Keratinocyte (primary cell): ENCODE measurements at regions of chr1 and their contacts with region 1.

Region 1: GRCh38 chr1:116483481-116484309 is 87.1 kb downstream of the CD58 start:
- DNase-seq: no peak
- H3K4me3 ChIP-seq: no peak overlapping the region
- H3K27ac ChIP-seq: no peak overlapping the region
- H3K4me1 ChIP-seq: peaks cover 6% of the 10 kb centered on the region
- H3K27me3 ChIP-seq: no peaks in the 10 kb centered on the region
- CTCF ChIP-seq: no peak

Region 2: DNA sequence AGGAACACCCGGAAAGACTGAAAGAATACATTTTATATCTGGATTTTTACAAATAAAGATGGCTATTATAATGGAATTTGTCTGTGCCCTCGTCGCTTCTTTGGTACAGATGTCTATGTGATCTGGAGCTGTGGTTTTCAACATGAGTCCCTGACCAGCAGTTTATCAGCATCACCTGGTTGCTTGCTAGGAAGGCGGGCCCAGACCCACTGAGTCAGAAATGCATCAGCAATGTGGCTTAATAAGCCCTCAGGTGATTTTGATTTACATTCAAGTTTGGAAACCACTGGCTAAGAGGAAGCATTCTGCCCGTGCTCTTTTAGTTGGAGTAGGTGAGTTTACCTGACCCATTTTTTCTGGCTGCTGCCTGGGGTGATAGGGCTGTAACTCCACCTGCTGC is 79.0 kb before region 1 on chr1:
- dilution Hi-C with region 1: loop called (anchors 5 kb)
- DNase-seq: peak; percentile 61
- H3K4me3 ChIP-seq: no peak overlapping the region
- H3K27ac ChIP-seq: no peak overlapping the region
- H3K4me1 ChIP-seq: peaks cover 37% of the 10 kb centered on the region
- H3K27me3 ChIP-seq: no peaks in the 10 kb centered on the region
- CTCF ChIP-seq: peak in 1 of 3 experiments; percentile 0